ENCODE measurements at regions of chr2 and their contacts with region 1.

Region 1: DNA sequence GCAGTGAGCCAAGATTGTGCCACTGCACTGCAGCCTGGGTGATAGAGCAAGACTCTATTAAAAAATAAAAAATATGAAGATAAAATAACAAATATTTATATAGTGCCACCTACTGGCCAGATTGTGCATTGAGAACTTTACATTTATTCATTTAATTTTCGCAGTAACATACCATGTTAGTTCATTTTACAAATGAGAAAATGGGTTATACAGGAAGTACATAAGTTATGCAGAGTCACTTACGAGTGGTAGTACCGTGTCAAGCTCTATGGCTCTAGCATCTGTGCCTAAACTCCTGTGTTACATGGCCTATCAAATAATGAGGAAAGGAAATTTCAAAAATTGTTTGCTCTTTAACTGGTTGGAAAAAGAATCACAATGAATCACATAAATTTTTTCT is 27.9 kb downstream of the RIF1 start:
- DNase-seq: no peak
- ATAC-seq: no peak
- H3K4me3 Mint-ChIP-seq: no peak overlapping the region
- H3K27ac Mint-ChIP-seq: no peak overlapping the region
- H3K4me1 Mint-ChIP-seq: peaks cover 14% of the 10 kb centered on the region
- H3K27me3 Mint-ChIP-seq: no peaks in the 10 kb centered on the region

Region 2: DNA sequence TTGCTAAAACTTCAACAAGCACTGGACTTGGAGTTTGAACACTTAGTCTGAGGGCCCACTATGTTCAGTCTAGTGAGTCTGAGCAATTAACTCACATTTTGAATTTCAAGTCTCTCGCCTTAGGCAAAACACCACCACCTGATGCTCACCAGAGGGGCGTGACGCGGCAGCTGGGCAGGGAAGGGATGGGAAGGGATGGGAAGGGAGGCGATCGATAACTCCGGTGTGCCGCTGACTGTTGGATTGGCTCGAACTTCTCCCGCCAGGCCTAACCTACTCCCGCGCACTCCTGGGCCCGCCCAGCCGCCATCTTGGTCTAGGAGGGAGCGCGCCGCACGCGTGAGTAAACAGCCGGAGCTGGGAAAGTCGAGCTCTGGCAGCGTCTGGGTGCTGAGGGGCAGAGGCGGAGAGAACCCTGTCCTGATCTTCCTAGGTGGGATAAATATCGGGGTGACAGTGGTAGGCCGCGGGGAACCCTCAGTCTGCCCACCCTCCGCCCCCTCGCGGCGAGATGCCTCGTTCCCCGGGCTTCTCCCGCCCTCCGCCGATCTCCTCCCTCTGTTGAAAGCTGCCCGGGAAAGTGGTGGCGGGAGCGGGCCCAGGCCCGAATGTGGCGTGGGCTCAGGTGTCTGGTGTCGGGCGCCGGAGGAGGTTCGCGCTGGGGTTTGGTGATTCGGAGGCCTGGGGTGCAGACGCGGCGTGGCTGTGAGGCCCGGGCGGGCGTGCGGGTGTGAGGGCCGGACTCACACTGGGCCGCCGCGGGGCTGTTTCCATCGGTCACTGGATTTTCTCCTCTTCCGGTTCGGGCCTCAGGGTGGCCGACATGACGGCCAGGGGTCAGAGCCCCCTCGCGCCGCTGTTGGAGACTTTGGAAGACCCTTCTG is 27.8 kb before region 1 on chr2 and contains the start of gene RIF1:
- CTCF ChIA-PET with region 1: interaction called, 12 read pairs
- POLR2A ChIA-PET with region 1: no interaction called
- DNase-seq: peak; percentile 82
- ATAC-seq: peak; percentile 95
- H3K4me3 Mint-ChIP-seq: peak within 1 kb of the TSS; percentile 97
- H3K27ac Mint-ChIP-seq: peak within 1 kb of the TSS; percentile 98
- H3K4me1 Mint-ChIP-seq: peaks cover 33% of the 10 kb centered on the region
- H3K27me3 Mint-ChIP-seq: peaks cover 6% of the 10 kb centered on the region
- total RNA-seq, gene RIF1: 55.9 to 56.6 TPM

Measured in activated CD8-positive, alpha-beta T cell treated with anti-CD3 and anti-CD28 coated beads, Interleukin-2, amount 10 ng/mL, durations not matched to agents 7 days and 5 days (primary cell).